HCT116 (cell line): ENCODE measurements at regions of chr6 and their contacts with region 1.

Region 1: GRCh38 chr6:46781478-46782378 is 11.5 kb upstream of the MEP1A start:
- DNase-seq: peak; percentile 58
- ATAC-seq: peak; percentile 83
- H3K4me3 ChIP-seq: no peak overlapping the region
- H3K27ac ChIP-seq: no peak overlapping the region
- H3K4me1 ChIP-seq: no peaks in the 10 kb centered on the region
- H3K27me3 ChIP-seq: no peaks in the 10 kb centered on the region
- CTCF ChIP-seq: peak; percentile 66 to 76 (median 75)
- POLR2A ChIP-seq: no peak
- RAD21 ChIP-seq: peak; percentile 81

Region 2: GRCh38 chr6:46221222-46221793 is 560.4 kb before region 1 on chr6:
- CTCF ChIA-PET with region 1: no interaction called
- POLR2A ChIA-PET with region 1: no interaction called
- RAD21 ChIA-PET with region 1: no interaction called
- intact Hi-C with region 1: loop called (anchors 5 kb)
- DNase-seq: peak; percentile 18
- ATAC-seq: peak; percentile 83
- H3K4me3 ChIP-seq: no peak overlapping the region
- H3K27ac ChIP-seq: no peak overlapping the region
- H3K4me1 ChIP-seq: no peaks in the 10 kb centered on the region
- H3K27me3 ChIP-seq: 0 out of 2 replicates have a peak, but pooled peaks cover 4% of the 10 kb centered on the region
- CTCF ChIP-seq: peak; percentile 66 to 87 (median 74)
- POLR2A ChIP-seq: no peak
- RAD21 ChIP-seq: peak; percentile 85

Region 3: DNA sequence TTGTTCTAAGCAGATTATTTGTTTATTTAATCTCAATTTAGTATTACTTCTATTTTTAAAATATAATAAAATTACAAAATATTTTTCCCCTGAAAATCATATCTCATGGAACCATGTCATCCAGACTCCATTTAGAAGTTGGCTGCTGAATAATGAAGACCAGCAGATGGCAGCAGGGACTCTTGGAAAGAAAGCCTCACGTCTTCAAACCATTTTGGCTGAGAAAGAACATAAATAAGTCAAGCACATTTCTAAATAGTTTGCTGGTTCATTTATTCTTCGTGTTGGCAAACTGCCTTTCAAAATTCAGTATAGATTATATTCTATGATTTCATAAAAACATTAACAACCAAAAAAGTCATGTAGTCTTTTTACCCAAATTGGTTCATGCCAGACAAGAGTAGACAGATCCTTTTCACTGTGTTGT is 362.1 kb before region 1 on chr6:
- CTCF ChIA-PET with region 1: no interaction called
- POLR2A ChIA-PET with region 1: no interaction called
- RAD21 ChIA-PET with region 1: no interaction called
- intact Hi-C with region 1: loop called (anchors 1 kb)
- DNase-seq: peak; percentile 60
- ATAC-seq: peak; percentile 63; the same call in 1 of the 2 replicates
- H3K4me3 ChIP-seq: no peak overlapping the region
- H3K27ac ChIP-seq: no peak overlapping the region
- H3K4me1 ChIP-seq: no peaks in the 10 kb centered on the region
- H3K27me3 ChIP-seq: no peaks in the 10 kb centered on the region
- CTCF ChIP-seq: peak; percentile 67 to 88 (median 73)
- POLR2A ChIP-seq: no peak
- RAD21 ChIP-seq: peak; percentile 91

Region 4: GRCh38 chr6:46704562-46704961 is 77.2 kb before region 1 on chr6:
- CTCF ChIA-PET with region 1: interaction called, 3 read pairs
- POLR2A ChIA-PET with region 1: no interaction called
- RAD21 ChIA-PET with region 1: no interaction called
- intact Hi-C with region 1: loop called (anchors 1 kb)
- DNase-seq: peak; percentile 44
- ATAC-seq: peak; percentile 77
- H3K4me3 ChIP-seq: no peak overlapping the region
- H3K27ac ChIP-seq: no peak overlapping the region
- H3K4me1 ChIP-seq: 0 out of 4 replicates have a peak, but pooled peaks cover 0 to 4% of the 10 kb centered on the region in 2 experiments
- H3K27me3 ChIP-seq: no peaks in the 10 kb centered on the region
- CTCF ChIP-seq: peak in 2 of 3 experiments; percentile 38 to 61; a peak in 3 of 6 replicates
- POLR2A ChIP-seq: no peak
- RAD21 ChIP-seq: peak; percentile 75

Region 5: GRCh38 chr6:46893648-46894047 is 111.9 kb after region 1 on chr6:
- CTCF ChIA-PET with region 1: no interaction called
- POLR2A ChIA-PET with region 1: no interaction called
- RAD21 ChIA-PET with region 1: no interaction called
- intact Hi-C with region 1: no loop called
- DNase-seq: no peak
- ATAC-seq: no peak
- H3K4me3 ChIP-seq: no peak overlapping the region
- H3K27ac ChIP-seq: no peak overlapping the region
- H3K4me1 ChIP-seq: peaks cover 0 to 5% of the 10 kb centered on the region in 2 experiments; a peak in 1 of 4 replicates
- H3K27me3 ChIP-seq: no peaks in the 10 kb centered on the region
- CTCF ChIP-seq: no peak
- POLR2A ChIP-seq: no peak
- RAD21 ChIP-seq: no peak

Region 6: GRCh38 chr6:47103931-47104330 is 322.2 kb after region 1 on chr6:
- CTCF ChIA-PET with region 1: no interaction called
- POLR2A ChIA-PET with region 1: no interaction called
- RAD21 ChIA-PET with region 1: no interaction called
- intact Hi-C with region 1: no loop called
- DNase-seq: no peak
- ATAC-seq: no peak
- H3K4me3 ChIP-seq: no peak overlapping the region
- H3K27ac ChIP-seq: no peak overlapping the region
- H3K4me1 ChIP-seq: peaks cover 0 to 12% of the 10 kb centered on the region in 2 experiments; a peak in 1 of 4 replicates
- H3K27me3 ChIP-seq: no peaks in the 10 kb centered on the region
- CTCF ChIP-seq: no peak
- POLR2A ChIP-seq: no peak
- RAD21 ChIP-seq: no peak

Region 7: GRCh38 chr6:47344022-47344421 is 562.3 kb after region 1 on chr6:
- CTCF ChIA-PET with region 1: no interaction called
- POLR2A ChIA-PET with region 1: no interaction called
- RAD21 ChIA-PET with region 1: no interaction called
- intact Hi-C with region 1: no loop called
- DNase-seq: no peak
- ATAC-seq: no peak
- H3K4me3 ChIP-seq: no peak overlapping the region
- H3K27ac ChIP-seq: no peak overlapping the region
- H3K4me1 ChIP-seq: no peaks in the 10 kb centered on the region
- H3K27me3 ChIP-seq: no peaks in the 10 kb centered on the region
- CTCF ChIP-seq: no peak
- POLR2A ChIP-seq: no peak
- RAD21 ChIP-seq: no peak